Posterior vena cava (tissue), 2 donors: ENCODE measurements at regions of chr20 and their contacts with region 1.

Region 1: DNA sequence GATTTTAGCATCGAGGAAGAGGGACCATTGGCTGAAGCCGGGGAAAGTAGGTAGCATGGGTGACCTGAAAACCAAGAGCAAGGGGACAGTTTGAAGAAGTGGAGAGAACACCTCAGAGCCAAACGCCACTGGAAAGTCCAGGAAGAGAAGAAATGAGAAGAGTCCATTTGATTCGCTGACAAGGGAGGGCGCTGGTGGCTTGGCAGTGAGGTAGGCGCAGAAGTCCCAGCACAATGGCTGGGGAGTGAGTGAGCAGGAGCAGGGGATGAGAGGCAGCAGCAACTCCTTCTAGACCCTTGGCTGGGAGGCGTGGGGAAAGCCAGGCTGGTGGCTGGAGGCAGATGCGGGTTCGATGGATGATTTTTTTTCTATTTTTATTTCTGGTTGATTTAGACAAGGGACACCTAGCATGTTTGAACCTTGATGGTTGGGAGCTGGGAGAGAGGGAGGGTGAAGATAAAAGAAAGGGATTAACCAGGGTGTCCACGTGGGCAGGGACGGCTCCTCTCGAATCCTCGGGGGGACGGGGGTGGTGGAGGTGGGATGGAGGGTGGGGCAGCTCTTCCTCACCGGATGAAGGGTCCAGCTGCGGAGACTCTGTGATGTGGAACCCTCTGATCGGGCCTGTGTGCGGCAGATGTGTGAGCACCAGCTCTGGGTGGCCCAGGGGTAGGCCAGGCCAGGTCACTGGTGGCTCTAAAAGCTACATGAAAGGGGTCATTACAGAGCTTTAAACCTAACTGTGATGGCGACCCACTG is 164.2 kb downstream of the NFATC2 start:
- DNase-seq: no peak

Region 2: DNA sequence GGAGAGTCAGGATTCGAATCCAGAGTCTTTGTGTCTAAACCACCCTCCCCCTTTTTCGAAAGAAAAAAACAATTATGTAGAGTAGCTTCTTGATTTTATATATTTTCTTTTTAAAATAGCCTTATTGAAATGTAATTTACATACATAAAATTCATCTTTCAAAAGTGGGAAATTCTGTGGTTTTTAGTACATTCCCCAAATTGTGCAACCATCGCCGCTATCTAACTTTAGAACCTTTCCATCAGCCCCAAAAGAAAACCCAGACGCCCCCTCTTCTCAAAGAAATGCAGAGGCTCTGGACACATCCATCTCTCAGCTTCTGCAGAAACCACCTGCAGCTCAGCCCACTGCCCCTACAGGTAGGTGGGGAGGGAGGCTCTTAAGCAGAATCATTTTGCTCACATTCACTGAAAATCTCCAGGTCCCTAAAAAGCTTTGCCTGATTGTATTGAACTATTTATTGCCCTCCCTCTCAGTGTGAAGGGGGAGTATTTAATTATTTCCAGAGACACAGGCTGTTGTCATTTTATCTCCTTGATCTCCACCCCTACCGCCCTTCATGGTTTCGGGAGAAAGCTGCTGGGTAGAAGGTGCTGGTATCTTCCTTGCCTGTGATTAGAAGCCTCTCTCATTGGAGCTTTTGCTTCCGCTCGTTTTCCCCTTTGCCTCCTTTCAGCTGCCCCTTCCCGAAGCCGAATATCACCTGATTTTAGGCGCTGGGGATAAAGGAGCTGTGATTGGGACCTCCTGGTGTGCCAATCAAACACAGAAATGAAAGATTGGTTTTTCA is 286.7 kb before region 1 on chr20:
- intact Hi-C with region 1: no loop called
- DNase-seq: peak; percentile 28

Region 3: GRCh38 chr20:51326201-51326819 is 52.0 kb before region 1 on chr20:
- intact Hi-C with region 1: loop called in 1 of 2 experiments (anchors 5 kb)
- DNase-seq: no peak

Region 4: GRCh38 chr20:51412333-51412871 is 34.1 kb after region 1 on chr20:
- intact Hi-C with region 1: no loop called
- DNase-seq: no peak

Region 5: GRCh38 chr20:51586005-51586440 is 207.7 kb after region 1 on chr20:
- intact Hi-C with region 1: loop called in 1 of 2 experiments (anchors 5 kb)
- DNase-seq: no peak